ENCODE measurements at regions of chr1 and their contacts with region 1.

Region 1: DNA sequence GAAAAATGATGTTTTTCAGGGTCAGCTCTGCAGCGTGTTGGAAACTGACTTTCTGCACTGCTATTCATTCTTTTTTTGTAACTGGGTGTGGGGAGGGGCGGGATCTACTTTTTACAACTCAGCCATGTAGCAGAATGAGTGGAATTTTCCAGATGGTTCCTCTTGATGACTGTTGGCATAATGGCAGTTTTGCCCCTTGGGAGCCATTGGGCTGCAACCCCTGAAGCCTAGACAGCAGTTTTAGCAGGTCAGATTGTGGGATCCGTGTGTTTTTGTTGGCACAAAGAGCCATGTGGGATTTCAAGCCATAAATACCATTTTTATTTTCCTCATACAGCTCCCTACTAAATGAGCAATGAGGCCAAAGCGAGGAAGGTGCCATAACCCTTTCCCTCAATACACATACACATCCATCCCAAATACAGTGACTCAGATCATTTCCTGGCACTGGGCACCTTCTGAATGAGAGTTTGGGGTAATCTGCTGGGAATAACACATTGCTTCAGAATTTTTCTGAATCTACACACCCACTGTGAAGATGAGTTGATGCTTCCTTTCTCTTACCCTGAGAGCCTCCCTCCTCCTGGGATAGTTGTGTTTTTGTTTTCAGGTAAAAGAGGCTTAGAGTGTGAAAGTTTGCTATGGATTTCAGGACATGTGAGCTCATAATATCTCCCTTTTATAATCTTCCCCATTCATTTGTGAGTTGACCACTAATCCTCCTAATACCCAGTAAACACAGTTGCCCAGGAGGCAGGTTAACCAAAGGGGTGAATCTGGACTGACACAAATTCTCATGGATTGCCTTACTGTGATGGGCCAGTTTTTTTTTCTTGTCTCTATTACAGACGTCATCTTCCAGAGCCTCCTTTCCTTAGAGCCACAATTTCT is 13.1 kb downstream of the S100A10 start:
- DNase-seq: peak; percentile 84
- H3K4me3 ChIP-seq: no peak overlapping the region
- CTCF ChIP-seq: no peak

Region 2: GRCh38 chr1:151993654-151994496 is 13.3 kb after region 1 on chr1 and contains the start of gene S100A10:
- CTCF ChIA-PET with region 1: interaction called, 120 read pairs
- POLR2A ChIA-PET with region 1: interaction called, 13 read pairs
- DNase-seq: no peak
- H3K4me3 ChIP-seq: peak within 1 kb of the TSS; percentile 94
- CTCF ChIP-seq: no peak

Region 3: DNA sequence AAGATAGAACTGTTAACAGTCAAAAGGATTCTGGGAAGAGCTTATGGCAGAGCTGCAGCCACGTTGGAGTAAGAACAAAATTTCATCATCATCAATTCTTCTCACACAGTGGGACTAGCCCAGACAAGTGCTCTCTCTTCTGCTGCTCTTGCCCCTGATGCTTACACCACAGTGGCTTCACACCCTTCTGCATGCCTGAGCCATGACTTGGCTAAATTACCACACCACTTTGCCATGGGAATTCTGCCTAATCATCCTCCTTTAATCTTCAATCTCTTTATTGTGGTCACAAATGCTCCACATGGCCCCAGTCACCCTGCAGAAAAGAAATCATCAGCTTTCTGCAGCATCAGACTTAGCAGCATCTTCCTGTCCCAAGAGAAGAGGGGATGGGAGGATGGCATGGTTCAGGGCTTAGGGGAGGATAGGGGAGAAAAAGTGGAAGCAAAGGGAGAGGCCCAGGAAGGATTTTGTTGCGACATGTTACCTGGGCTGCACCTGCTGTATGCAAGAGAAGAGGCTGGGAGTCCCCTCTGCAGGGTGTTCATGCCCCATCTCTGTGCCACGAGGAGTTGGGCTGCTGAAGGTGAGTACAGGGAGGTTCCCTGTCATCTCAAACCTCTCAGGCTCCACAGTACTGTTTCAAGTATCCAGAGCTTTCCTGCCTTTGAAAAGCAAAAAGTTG is 187.4 kb after region 1 on chr1:
- CTCF ChIA-PET with region 1: no interaction called
- POLR2A ChIA-PET with region 1: no interaction called
- DNase-seq: peak; percentile 69
- H3K4me3 ChIP-seq: no peak overlapping the region
- CTCF ChIP-seq: no peak